ENCODE measurements at regions of chr12 and their contacts with region 1.

Region 1: GRCh38 chr12:11202811-11203210 is 16.1 kb upstream of the TAS2R42 start:
- DNase-seq: no peak

Region 2: DNA sequence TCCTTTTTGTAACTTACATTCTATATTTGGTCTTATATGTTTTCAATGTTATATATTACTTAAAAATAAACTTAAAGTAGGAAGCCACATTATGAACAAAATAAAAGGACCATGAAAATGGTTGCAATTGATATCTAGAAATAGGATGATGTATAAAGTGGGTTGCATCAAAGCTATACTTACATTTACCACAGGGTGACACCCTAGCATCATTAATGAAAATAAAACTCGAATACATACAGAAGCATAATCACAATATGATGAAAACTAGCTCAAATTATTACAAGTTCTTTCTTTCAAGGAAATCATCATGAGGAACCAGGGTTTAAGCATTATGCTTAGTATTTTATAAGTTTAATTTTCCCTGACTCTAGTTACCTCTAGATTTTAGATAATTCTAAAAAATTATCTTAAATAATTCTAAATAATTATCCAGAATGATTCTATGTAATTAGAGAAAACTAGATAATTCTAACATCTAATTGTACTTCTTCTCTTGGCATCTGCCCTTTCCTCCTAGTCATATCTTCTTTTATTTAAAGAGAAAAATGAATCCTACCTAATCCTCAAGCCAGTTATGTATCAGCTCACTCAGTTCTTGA is 431.6 kb before region 1 on chr12:
- intact Hi-C with region 1: loop called (anchors 2 kb)
- DNase-seq: no peak

Region 3: DNA sequence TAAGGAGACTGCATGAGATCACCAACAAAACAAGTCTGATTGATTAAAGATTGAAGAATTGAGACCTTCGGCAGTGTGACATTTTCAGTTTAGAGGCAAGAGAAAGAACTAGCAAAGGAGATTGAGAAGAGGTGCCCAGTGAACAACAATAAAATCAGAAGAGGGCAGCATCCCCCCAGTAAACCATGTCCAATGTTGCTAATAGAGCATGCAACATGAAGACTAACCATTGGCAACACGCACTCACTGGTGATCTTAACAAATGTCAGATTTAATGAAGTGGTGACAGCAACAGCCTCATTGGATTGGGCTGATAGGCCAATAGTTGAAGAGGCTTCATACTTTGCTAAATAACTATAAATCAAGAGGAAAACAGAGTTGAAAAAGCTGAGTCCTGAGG is 243.0 kb before region 1 on chr12:
- intact Hi-C with region 1: loop called (anchors 1 kb)
- DNase-seq: peak in 2 of 10 donors; percentile 41 to 55

Region 4: GRCh38 chr12:11252098-11252497 is 49.3 kb after region 1 on chr12:
- intact Hi-C with region 1: no loop called
- DNase-seq: no peak